ENCODE measurements at regions of chr10 and their contacts with region 1.

Region 1: GRCh38 chr10:8312781-8313180 is 258.3 kb downstream of the GATA3 start:
- DNase-seq: no peak
- H3K4me3 Mint-ChIP-seq: no peak overlapping the region
- H3K27ac Mint-ChIP-seq: no peak overlapping the region
- H3K4me1 Mint-ChIP-seq: peaks cover 32% of the 10 kb centered on the region
- H3K27me3 Mint-ChIP-seq: no peaks in the 10 kb centered on the region

Region 2: GRCh38 chr10:8059959-8060703 is 252.7 kb before region 1 on chr10:
- CTCF ChIA-PET with region 1: no interaction called
- intact Hi-C with region 1: loop called (anchors 1 kb)
- DNase-seq: peak; percentile 75
- H3K4me3 Mint-ChIP-seq: peak overlapping the region; percentile 54
- H3K27ac Mint-ChIP-seq: peak overlapping the region; percentile 62
- H3K4me1 Mint-ChIP-seq: peaks cover 81% of the 10 kb centered on the region
- H3K27me3 Mint-ChIP-seq: no peaks in the 10 kb centered on the region

Region 3: GRCh38 chr10:8254350-8254749 is 58.4 kb before region 1 on chr10:
- CTCF ChIA-PET with region 1: no interaction called
- intact Hi-C with region 1: loop called (anchors 2 kb)
- DNase-seq: peak; percentile 40
- H3K4me3 Mint-ChIP-seq: no peak overlapping the region
- H3K27ac Mint-ChIP-seq: peak overlapping the region; percentile 73
- H3K4me1 Mint-ChIP-seq: peaks cover 23% of the 10 kb centered on the region
- H3K27me3 Mint-ChIP-seq: no peaks in the 10 kb centered on the region

Region 4: GRCh38 chr10:8331883-8332729 is 19.3 kb after region 1 on chr10:
- CTCF ChIA-PET with region 1: interaction called, 3 read pairs
- intact Hi-C with region 1: loop called (anchors 2 kb)
- DNase-seq: peak; percentile 80
- H3K4me3 Mint-ChIP-seq: peak overlapping the region; percentile 75
- H3K27ac Mint-ChIP-seq: no peak overlapping the region
- H3K4me1 Mint-ChIP-seq: peaks cover 20% of the 10 kb centered on the region
- H3K27me3 Mint-ChIP-seq: peaks cover 13% of the 10 kb centered on the region

Region 5: DNA sequence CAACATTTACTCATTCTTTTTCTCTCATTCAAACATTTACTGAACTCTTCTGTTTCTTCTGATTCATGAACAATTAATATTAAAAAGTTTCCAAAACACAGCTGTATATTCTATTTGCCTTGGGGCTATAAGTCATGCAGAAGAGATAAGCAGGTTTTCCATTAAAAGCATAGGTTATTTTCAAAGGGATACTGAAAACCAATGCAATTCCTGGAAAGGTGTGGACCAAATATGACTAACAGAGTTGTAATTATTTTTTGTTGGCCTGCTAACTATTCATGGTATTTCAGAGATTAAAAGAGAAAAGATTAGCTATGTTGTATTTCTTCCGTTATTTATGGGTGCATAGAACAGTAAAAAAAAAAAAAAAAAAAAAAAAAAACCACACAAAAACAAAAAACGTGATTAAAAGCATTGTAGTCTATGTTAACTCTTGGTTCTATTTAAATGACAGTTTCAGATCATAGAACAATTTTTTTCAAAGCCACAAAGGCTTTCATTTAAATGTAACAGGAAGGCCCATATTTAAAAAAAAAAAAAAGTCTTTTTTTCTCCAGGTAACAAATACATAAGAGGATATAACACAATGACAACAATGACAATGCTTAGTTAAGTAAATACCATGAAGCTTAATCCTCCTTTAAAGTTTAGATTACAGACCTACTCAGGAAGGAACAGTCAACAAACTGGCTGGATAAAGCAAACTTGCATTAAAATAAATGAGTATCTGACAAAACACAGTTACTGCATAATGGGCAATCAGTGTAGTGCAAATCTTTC is 784.6 kb after region 1 on chr10:
- CTCF ChIA-PET with region 1: no interaction called
- intact Hi-C with region 1: loop called (anchors 10 kb)
- DNase-seq: no peak
- H3K4me3 Mint-ChIP-seq: no peak overlapping the region
- H3K27ac Mint-ChIP-seq: no peak overlapping the region
- H3K4me1 Mint-ChIP-seq: peaks cover 28% of the 10 kb centered on the region
- H3K27me3 Mint-ChIP-seq: no peaks in the 10 kb centered on the region

Measured in activated naive CD4-positive, alpha-beta T cell treated with anti-CD3 and anti-CD28 coated beads for 36 hours (primary cell).